ENCODE measurements at regions of chr2 and their contacts with region 1.

Region 1: GRCh38 chr2:238615187-238615586 is 188.5 kb downstream of the ASB1 start:
- DNase-seq: no peak
- ATAC-seq: no peak
- H3K4me3 ChIP-seq: no peak overlapping the region
- H3K27ac ChIP-seq: no peak overlapping the region
- H3K4me1 ChIP-seq: no peaks in the 10 kb centered on the region
- H3K27me3 ChIP-seq: no peaks in the 10 kb centered on the region
- CTCF ChIP-seq: no peak
- POLR2A ChIP-seq: no peak
- RAD21 ChIP-seq: no peak

Region 2: GRCh38 chr2:238513346-238513745 is 101.8 kb before region 1 on chr2:
- CTCF ChIA-PET with region 1: interaction called, 6 read pairs
- POLR2A ChIA-PET with region 1: no interaction called
- RAD21 ChIA-PET with region 1: interaction called in 1 of 2 experiments, 3 read pairs
- intact Hi-C with region 1: loop called (anchors 1 kb)
- DNase-seq: peak; percentile 42
- ATAC-seq: peak; percentile 95
- H3K4me3 ChIP-seq: no peak overlapping the region
- H3K27ac ChIP-seq: no peak overlapping the region
- H3K4me1 ChIP-seq: no peaks in the 10 kb centered on the region
- H3K27me3 ChIP-seq: no peaks in the 10 kb centered on the region
- CTCF ChIP-seq: peak; percentile 73 to 83 (median 73)
- POLR2A ChIP-seq: no peak
- RAD21 ChIP-seq: peak; percentile 85